Right ventricle myocardium inferior (tissue), 1 donor: ENCODE measurements at regions of chr15 and their contacts with region 1.

Region 1: GRCh38 chr15:100349696-100350433 is 8.1 kb upstream of the ADAMTS17 start:
- DNase-seq: peak; percentile 96
- ATAC-seq: peak; percentile 97

Region 2: GRCh38 chr15:100572362-100572983 is 222.6 kb after region 1 on chr15:
- intact Hi-C with region 1: loop called (anchors 2 kb)
- DNase-seq: no peak
- ATAC-seq: no peak

Region 3: DNA sequence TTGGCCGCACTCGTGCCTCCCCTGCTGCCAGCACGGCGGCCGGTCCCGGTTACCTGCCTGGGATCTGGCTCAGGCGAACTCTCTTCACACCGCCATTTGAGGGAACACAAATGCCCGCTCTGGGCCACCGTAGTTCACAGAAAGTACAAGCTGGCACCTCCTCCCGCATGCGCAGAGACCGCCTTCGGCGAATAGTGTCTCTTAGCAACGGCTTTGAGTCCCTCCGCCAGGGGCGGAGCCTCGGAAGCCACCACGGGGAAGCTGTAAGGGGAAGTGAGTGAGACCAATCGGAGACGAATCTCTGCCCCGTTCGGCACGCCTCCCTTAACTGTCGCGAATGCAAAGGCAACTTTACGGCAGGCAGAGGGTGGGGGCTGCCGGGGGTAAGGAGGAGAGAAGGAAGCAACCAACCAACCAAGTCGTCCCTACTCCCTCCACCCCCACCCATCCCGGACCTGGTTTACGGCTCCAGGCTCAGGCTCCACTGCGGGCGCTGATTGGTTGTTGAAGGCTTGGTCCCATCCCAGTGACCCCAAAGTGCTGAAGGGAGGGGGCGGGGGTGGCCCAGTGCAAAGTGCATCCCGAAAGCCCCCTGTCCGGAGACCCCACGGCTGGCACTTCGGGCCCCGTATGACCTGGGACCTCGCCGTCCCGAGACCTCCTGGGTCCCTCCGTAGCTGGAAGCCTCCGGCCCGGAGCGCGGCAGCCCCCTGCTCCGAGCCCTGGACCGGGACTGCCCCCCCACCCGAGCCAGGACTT is 252.4 kb after region 1 on chr15 and contains the starts of genes ASB7 and LINS1:
- intact Hi-C with region 1: loop called (anchors 10 kb)
- DNase-seq: peak; percentile 100
- ATAC-seq: peak; percentile 98
- total RNA-seq, gene ASB7: 5.3 TPM
- total RNA-seq, gene LINS1: 7.0 TPM